K562 (cell line): ENCODE measurements at regions of chr22 and their contacts with region 1.

Region 1: DNA sequence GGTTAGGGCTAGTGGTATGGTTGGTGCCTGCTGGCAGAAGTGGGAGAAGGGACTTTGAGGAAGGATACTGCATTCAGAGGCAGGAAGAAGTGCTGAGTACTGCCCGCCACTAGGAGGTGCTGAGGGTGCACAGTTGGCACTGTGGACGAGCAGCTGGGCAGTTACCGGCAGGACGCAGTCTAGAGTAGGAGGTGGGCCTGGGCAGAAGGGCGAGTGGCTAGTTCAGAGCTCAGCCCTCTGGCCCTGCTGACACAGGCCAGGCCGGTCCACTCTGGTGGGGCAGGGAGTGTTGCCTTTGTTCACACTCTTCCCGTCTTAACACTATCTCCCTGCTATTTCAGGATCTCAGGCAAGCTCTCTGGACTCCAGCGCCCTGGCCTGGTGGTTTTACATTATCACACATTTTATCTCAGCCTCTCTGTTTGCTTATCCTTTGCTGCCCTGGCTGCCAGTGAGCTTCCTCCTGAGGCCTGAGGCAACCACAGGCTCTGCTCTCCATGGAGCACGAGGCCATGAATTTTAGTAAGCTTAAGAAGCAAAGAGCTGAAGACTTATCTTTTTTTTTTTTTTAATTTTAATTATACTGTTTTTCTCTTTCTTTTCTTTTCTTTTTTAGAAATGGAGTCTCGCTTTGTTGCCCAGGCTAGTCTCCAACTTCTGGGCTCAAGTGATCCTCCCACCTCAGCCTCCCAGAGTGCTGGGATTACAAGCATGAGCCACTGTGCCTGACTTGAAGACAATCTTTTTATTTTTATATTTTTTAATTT is 26.9 kb downstream of the SNAP29 start:
- DNase-seq: peak; percentile 97 to 98 (median 98)
- ATAC-seq: peak; percentile 99
- H3K4me3 ChIP-seq: no peak overlapping the region
- H3K27ac ChIP-seq: peak overlapping the region; percentile 38
- H3K4me1 ChIP-seq: peaks cover 12 to 14% of the 10 kb centered on the region in 2 experiments
- H3K27me3 ChIP-seq: no peaks in the 10 kb centered on the region
- CTCF ChIP-seq: peak; percentile 99 to 100 (median 99)
- EP300 ChIP-seq: peak; percentile 10; the same call in 1 of the 2 replicates
- POLR2A ChIP-seq: no peak; the same call in 1 of the 2 replicates
- RAD21 ChIP-seq: peak; percentile 100

Region 2: GRCh38 chr22:20741634-20742581 is 143.8 kb before region 1 on chr22:
- CTCF ChIA-PET with region 1: no interaction called
- POLR2A ChIA-PET with region 1: no interaction called
- in situ Hi-C with region 1: no loop called
- intact Hi-C with region 1: no loop called
- DNase-seq: peak; percentile 87 to 93 (median 90)
- ATAC-seq: peak; percentile 78
- H3K4me3 ChIP-seq: no peak overlapping the region
- H3K27ac ChIP-seq: no peak overlapping the region
- H3K4me1 ChIP-seq: no peaks in the 10 kb centered on the region
- H3K27me3 ChIP-seq: no peaks in the 10 kb centered on the region
- CTCF ChIP-seq: peak; percentile 94 to 100 (median 99)
- EP300 ChIP-seq: no peak
- POLR2A ChIP-seq: no peak
- RAD21 ChIP-seq: peak; percentile 54 to 86

Region 3: DNA sequence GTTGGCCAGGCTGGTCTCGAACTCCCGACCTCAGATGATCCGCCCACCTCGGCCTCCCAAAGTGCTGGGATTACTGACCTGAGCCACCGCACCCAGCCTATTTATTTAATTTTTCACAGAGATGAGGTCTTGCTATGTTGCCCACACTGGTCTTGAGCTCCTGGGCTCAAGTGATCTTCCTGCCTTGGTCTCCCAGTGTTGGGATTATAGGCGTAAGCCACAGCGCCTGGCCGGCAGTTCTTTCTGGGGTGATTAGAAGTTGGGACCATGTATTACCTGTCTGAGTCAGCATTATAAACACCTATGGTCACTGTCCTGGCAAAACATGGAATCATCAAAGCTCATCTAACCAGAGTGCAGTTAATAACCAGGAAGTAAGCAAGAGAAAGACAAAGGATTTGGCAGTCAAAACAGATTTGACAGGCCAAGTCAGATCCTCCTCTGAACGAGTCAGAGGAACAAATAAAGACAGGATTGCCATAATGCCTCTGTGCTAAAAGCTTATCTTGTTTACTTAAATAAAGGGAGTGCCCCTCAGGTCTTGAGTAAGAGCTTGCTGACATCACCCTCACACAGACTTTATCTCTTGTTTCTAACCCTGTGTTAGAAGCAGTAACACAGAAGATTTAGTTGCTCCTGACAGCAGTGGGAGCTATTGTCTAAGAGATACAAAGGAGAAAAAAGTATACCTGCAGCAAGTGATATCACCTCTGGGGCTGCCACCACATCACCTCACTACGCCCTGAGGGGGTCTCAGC is 108.1 kb before region 1 on chr22:
- CTCF ChIA-PET with region 1: interaction called, 16 read pairs
- POLR2A ChIA-PET with region 1: no interaction called
- in situ Hi-C with region 1: no loop called
- intact Hi-C with region 1: loop called (anchors 1 kb)
- DNase-seq: peak; percentile 97 to 99 (median 98)
- ATAC-seq: peak; percentile 97
- H3K4me3 ChIP-seq: no peak overlapping the region
- H3K27ac ChIP-seq: peak overlapping the region; percentile 69; the same call in 2 of the 3 replicates
- H3K4me1 ChIP-seq: peaks cover 21 to 32% of the 10 kb centered on the region in 2 experiments
- H3K27me3 ChIP-seq: no peaks in the 10 kb centered on the region
- CTCF ChIP-seq: peak in 2 of 3 experiments; percentile 90 to 99; a peak in 4 of 6 replicates
- EP300 ChIP-seq: peak; percentile 100
- POLR2A ChIP-seq: no peak
- RAD21 ChIP-seq: peak in 1 of 2 experiments; percentile 97; a peak in 2 of 4 replicates

Region 4: GRCh38 chr22:20833225-20833665 is 52.5 kb before region 1 on chr22:
- CTCF ChIA-PET with region 1: no interaction called
- POLR2A ChIA-PET with region 1: no interaction called
- in situ Hi-C with region 1: no loop called
- intact Hi-C with region 1: no loop called
- DNase-seq: peak in 2 of 4 experiments; percentile 22 to 46
- ATAC-seq: no peak
- H3K4me3 ChIP-seq: no peak overlapping the region
- H3K27ac ChIP-seq: no peak overlapping the region
- H3K4me1 ChIP-seq: peaks cover 0 to 3% of the 10 kb centered on the region in 2 experiments; a peak in 1 of 5 replicates
- H3K27me3 ChIP-seq: no peaks in the 10 kb centered on the region
- CTCF ChIP-seq: no peak
- EP300 ChIP-seq: no peak
- POLR2A ChIP-seq: no peak
- RAD21 ChIP-seq: no peak

Region 5: GRCh38 chr22:20858615-20859416 is 26.9 kb before region 1 on chr22 and contains the starts of genes PI4KA and SNAP29:
- CTCF ChIA-PET with region 1: interaction called, 4 read pairs
- POLR2A ChIA-PET with region 1: interaction called, 172 read pairs
- in situ Hi-C with region 1: no loop called
- intact Hi-C with region 1: no loop called
- DNase-seq: peak; percentile 100
- ATAC-seq: peak; percentile 92
- H3K4me3 ChIP-seq: peak within 1 kb of the TSS; percentile 57
- H3K27ac ChIP-seq: peak within 1 kb of the TSS; percentile 79
- H3K4me1 ChIP-seq: peaks cover 53 to 78% of the 10 kb centered on the region in 2 experiments
- H3K27me3 ChIP-seq: no peaks in the 10 kb centered on the region
- CTCF ChIP-seq: peak in 1 of 3 experiments; percentile 42; a peak in 2 of 6 replicates
- EP300 ChIP-seq: peak; percentile 84
- POLR2A ChIP-seq: no peak
- RAD21 ChIP-seq: no peak
- polyA plus RNA-seq, gene PI4KA: 7.3 to 11.1 TPM
- polyA plus RNA-seq, gene SNAP29: 19.5 to 22.8 TPM

Region 6: GRCh38 chr22:20904008-20904979 is 18.6 kb after region 1 on chr22:
- CTCF ChIA-PET with region 1: no interaction called
- POLR2A ChIA-PET with region 1: interaction called, 25 read pairs
- in situ Hi-C with region 1: no loop called
- intact Hi-C with region 1: no loop called
- DNase-seq: peak; percentile 48 to 63 (median 54)
- ATAC-seq: peak; percentile 9; the same call in 2 of the 3 replicates
- H3K4me3 ChIP-seq: no peak overlapping the region
- H3K27ac ChIP-seq: no peak overlapping the region
- H3K4me1 ChIP-seq: no peaks in the 10 kb centered on the region
- H3K27me3 ChIP-seq: peaks cover 15 to 27% of the 10 kb centered on the region in 2 experiments
- CTCF ChIP-seq: no peak
- EP300 ChIP-seq: peak; percentile 51; the same call in 1 of the 2 replicates
- POLR2A ChIP-seq: no peak
- RAD21 ChIP-seq: no peak

Region 7: GRCh38 chr22:20957316-20958101 is 71.8 kb after region 1 on chr22:
- CTCF ChIA-PET with region 1: interaction called, 6 read pairs
- POLR2A ChIA-PET with region 1: interaction called, 1,556 read pairs
- in situ Hi-C with region 1: no loop called
- intact Hi-C with region 1: loop called (anchors 1 kb)
- DNase-seq: no peak
- ATAC-seq: 0 out of 3 replicates have a peak, but pooled peaks have one; percentile 3
- H3K4me3 ChIP-seq: no peak overlapping the region
- H3K27ac ChIP-seq: no peak overlapping the region
- H3K4me1 ChIP-seq: peaks cover 0 to 25% of the 10 kb centered on the region in 2 experiments; a peak in 2 of 5 replicates
- H3K27me3 ChIP-seq: peaks cover 0 to 2% of the 10 kb centered on the region in 2 experiments; a peak in 1 of 5 replicates
- CTCF ChIP-seq: no peak
- EP300 ChIP-seq: no peak
- POLR2A ChIP-seq: no peak
- RAD21 ChIP-seq: no peak

Region 8: GRCh38 chr22:21074188-21074724 is 188.5 kb after region 1 on chr22:
- CTCF ChIA-PET with region 1: no interaction called
- POLR2A ChIA-PET with region 1: no interaction called
- in situ Hi-C with region 1: no loop called
- intact Hi-C with region 1: loop called (anchors 5 kb)
- DNase-seq: peak in 2 of 4 experiments; percentile 42 to 45
- ATAC-seq: peak; percentile 46
- H3K4me3 ChIP-seq: no peak overlapping the region
- H3K27ac ChIP-seq: no peak overlapping the region
- H3K4me1 ChIP-seq: peaks cover 0 to 21% of the 10 kb centered on the region in 2 experiments; a peak in 2 of 5 replicates
- H3K27me3 ChIP-seq: peaks cover 62 to 76% of the 10 kb centered on the region in 2 experiments
- CTCF ChIP-seq: no peak
- EP300 ChIP-seq: no peak
- POLR2A ChIP-seq: no peak
- RAD21 ChIP-seq: no peak